ENCODE measurements at regions of chr2 and their contacts with region 1.

Region 1: DNA sequence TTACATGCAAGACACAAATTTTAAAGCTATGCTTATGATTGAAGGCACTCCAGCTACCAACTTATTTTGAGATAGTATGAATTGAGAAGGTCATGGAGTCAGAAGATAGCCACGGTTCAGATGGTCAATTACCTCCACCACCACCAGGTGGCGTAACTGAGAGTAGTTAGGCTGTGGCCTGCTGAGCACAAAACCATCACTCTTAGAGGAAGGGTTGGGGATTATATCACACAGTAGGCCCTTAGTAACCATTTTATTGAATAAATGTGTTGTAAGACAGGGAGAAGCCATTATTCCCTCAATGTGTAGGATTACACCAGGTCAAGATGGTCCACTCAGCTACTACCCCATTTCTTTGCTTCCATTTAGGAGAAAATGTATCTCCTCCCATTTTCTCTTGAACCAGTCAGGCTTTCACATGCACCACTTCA is 18.8 kb downstream of the KLHL41 start:
- DNase-seq: peak; percentile 86
- ATAC-seq: peak; percentile 91
- H3K4me3 Mint-ChIP-seq: no peak overlapping the region
- H3K27ac Mint-ChIP-seq: no peak overlapping the region
- H3K4me1 Mint-ChIP-seq: no peaks in the 10 kb centered on the region
- H3K27me3 Mint-ChIP-seq: no peaks in the 10 kb centered on the region

Region 2: GRCh38 chr2:169080250-169081069 is 447.8 kb before region 1 on chr2:
- CTCF ChIA-PET with region 1: no interaction called
- POLR2A ChIA-PET with region 1: no interaction called
- intact Hi-C with region 1: no loop called
- DNase-seq: no peak
- ATAC-seq: no peak
- H3K4me3 Mint-ChIP-seq: no peak overlapping the region
- H3K27ac Mint-ChIP-seq: no peak overlapping the region
- H3K4me1 Mint-ChIP-seq: peaks cover 9% of the 10 kb centered on the region
- H3K27me3 Mint-ChIP-seq: no peaks in the 10 kb centered on the region

Region 3: GRCh38 chr2:169513926-169514325 is 14.4 kb before region 1 on chr2:
- CTCF ChIA-PET with region 1: interaction called, 19 read pairs
- POLR2A ChIA-PET with region 1: no interaction called
- intact Hi-C with region 1: no loop called
- DNase-seq: no peak
- ATAC-seq: no peak
- H3K4me3 Mint-ChIP-seq: no peak overlapping the region
- H3K27ac Mint-ChIP-seq: no peak overlapping the region
- H3K4me1 Mint-ChIP-seq: no peaks in the 10 kb centered on the region
- H3K27me3 Mint-ChIP-seq: no peaks in the 10 kb centered on the region

Region 4: GRCh38 chr2:169676357-169676756 is 148.1 kb after region 1 on chr2:
- CTCF ChIA-PET with region 1: no interaction called
- POLR2A ChIA-PET with region 1: no interaction called
- intact Hi-C with region 1: loop called in 1 of 2 experiments (anchors 2 kb)
- DNase-seq: no peak
- ATAC-seq: no peak
- H3K4me3 Mint-ChIP-seq: no peak overlapping the region
- H3K27ac Mint-ChIP-seq: no peak overlapping the region
- H3K4me1 Mint-ChIP-seq: no peaks in the 10 kb centered on the region
- H3K27me3 Mint-ChIP-seq: peaks cover 10% of the 10 kb centered on the region

Region 5: GRCh38 chr2:169790581-169790980 is 262.3 kb after region 1 on chr2:
- CTCF ChIA-PET with region 1: no interaction called
- POLR2A ChIA-PET with region 1: no interaction called
- intact Hi-C with region 1: loop called in 1 of 2 experiments (anchors 1 kb)
- DNase-seq: no peak
- ATAC-seq: no peak
- H3K4me3 Mint-ChIP-seq: no peak overlapping the region
- H3K27ac Mint-ChIP-seq: no peak overlapping the region
- H3K4me1 Mint-ChIP-seq: peaks cover 5% of the 10 kb centered on the region
- H3K27me3 Mint-ChIP-seq: peaks cover 15% of the 10 kb centered on the region

Region 6: DNA sequence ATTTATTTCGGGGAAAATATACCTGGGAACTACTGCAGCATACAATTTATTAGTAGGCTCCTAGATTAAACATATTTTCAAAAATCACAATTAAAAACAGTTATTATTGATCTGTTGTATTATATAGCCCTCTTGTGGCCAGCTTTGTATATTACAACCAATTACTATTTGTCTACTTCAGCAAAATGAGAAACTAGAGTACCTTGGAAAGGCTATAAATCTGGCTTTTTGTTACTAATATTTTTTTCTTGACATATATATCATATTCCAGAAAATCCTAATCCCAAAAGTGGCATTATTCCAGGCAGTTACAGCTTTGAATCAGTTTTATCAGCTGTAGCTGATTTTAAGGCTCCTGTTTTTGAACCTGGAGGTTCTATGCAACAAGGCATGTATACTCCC is 400.2 kb after region 1 on chr2:
- CTCF ChIA-PET with region 1: interaction called, 3 read pairs
- POLR2A ChIA-PET with region 1: no interaction called
- intact Hi-C with region 1: loop called (anchors 1 to 10 kb)
- DNase-seq: no peak
- ATAC-seq: peak; percentile 36
- H3K4me3 Mint-ChIP-seq: no peak overlapping the region
- H3K27ac Mint-ChIP-seq: no peak overlapping the region
- H3K4me1 Mint-ChIP-seq: no peaks in the 10 kb centered on the region
- H3K27me3 Mint-ChIP-seq: no peaks in the 10 kb centered on the region